Stomach (tissue), 19 donors: ENCODE measurements at regions of chr1 and their contacts with region 1.

Region 1: GRCh38 chr1:27862651-27863537 is 9.4 kb upstream of the THEMIS2 start:
- DNase-seq: peak in 1 of 2 donors; percentile 74
- H3K4me3 ChIP-seq: no peak overlapping the region
- H3K27ac ChIP-seq: peak overlapping the region in 4 of 5 donors; percentile 49 to 81 (median 63)
- H3K4me1 ChIP-seq: peaks cover 0 to 16% (median 3%) of the 10 kb centered on the region in 4 donors
- H3K27me3 ChIP-seq: no peaks in the 10 kb centered on the region
- CTCF ChIP-seq: no peak
- EP300 ChIP-seq: no peak
- POLR2A ChIP-seq: no peak

Region 2: GRCh38 chr1:27979151-27979858 is 116.4 kb after region 1 on chr1:
- intact Hi-C with region 1: loop called (anchors 10 kb)
- DNase-seq: peak in 1 of 2 donors; percentile 79
- H3K4me3 ChIP-seq: no peak overlapping the region
- H3K27ac ChIP-seq: peak overlapping the region in 1 of 5 donors; percentile 19
- H3K4me1 ChIP-seq: peaks cover 0 to 15% (median 7%) of the 10 kb centered on the region in 4 donors
- H3K27me3 ChIP-seq: no peaks in the 10 kb centered on the region
- CTCF ChIP-seq: peak in 5 of 7 experiments; percentile 15 to 64 (median 50)
- EP300 ChIP-seq: no peak
- POLR2A ChIP-seq: no peak